Aorta (tissue), 5 donors: ENCODE measurements at regions of chr20 and their contacts with region 1.

Region 1: DNA sequence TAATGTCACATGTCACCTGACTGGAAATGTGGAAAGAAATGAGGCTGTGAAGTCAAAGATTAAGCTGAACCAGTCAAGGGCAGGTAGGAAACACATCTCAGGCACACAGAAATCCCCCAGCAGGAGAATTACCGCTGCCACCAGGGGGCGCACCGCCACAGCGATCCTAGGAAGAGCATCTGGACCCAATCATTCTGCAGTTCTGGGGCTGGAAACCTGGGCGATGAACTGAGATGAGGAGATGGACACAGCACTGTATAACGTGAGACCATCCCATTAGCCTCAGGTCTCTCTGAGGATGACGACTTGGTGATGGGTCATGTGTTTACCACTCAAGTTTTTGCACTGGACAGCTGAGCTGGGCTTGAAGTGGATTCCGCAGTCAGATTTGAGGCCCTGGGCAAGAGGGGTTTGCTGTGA is 6.5 kb upstream of the SLC24A3 start:
- DNase-seq: peak; percentile 70 to 95
- ATAC-seq: peak; percentile 84
- H3K4me3 ChIP-seq: no peak overlapping the region
- H3K27ac ChIP-seq: no peak overlapping the region
- H3K4me1 ChIP-seq: no peaks in the 10 kb centered on the region
- H3K27me3 ChIP-seq: no peaks in the 10 kb centered on the region

Region 2: DNA sequence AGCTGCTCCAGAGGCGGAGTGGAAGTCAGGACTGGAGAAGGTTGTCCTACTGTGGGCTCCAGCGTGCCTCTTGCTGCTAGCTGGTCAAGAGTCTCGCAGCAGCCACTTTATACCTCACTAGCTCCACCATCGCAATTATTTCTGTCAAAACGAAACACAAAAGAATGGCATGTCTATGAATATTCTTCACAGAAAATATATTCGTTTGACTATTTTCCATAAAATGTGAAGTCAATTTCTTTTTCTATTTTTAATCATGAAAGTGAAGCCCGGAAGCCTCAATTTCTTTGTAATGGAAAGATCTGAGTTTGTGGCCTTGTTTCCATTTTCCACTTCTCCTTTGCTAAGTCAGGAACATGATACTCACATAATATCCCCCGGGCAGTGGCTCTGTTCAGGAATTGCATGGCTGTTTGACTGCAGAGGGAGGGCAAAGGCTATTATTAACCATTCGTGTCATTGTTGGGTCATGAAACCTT is 566.4 kb before region 1 on chr20:
- intact Hi-C with region 1: loop called in 1 of 2 experiments (anchors 5 kb)
- DNase-seq: no peak
- ATAC-seq: no peak
- H3K4me3 ChIP-seq: no peak overlapping the region
- H3K27ac ChIP-seq: no peak overlapping the region
- H3K4me1 ChIP-seq: peaks cover 0 to 2% of the 10 kb centered on the region in 2 donors
- H3K27me3 ChIP-seq: no peaks in the 10 kb centered on the region

Region 3: GRCh38 chr20:19583532-19584175 is 377.7 kb after region 1 on chr20:
- intact Hi-C with region 1: loop called (anchors 2 kb)
- DNase-seq: peak; percentile 74 to 91
- ATAC-seq: peak; percentile 66
- H3K4me3 ChIP-seq: no peak overlapping the region
- H3K27ac ChIP-seq: no peak overlapping the region
- H3K4me1 ChIP-seq: peaks cover 0 to under 1% of the 10 kb centered on the region in 2 donors
- H3K27me3 ChIP-seq: no peaks in the 10 kb centered on the region

Region 4: GRCh38 chr20:19588732-19589131 is 382.7 kb after region 1 on chr20:
- intact Hi-C with region 1: loop called (anchors 2 kb)
- DNase-seq: no peak
- ATAC-seq: no peak
- H3K4me3 ChIP-seq: no peak overlapping the region
- H3K27ac ChIP-seq: no peak overlapping the region
- H3K4me1 ChIP-seq: peaks cover 0 to 14% of the 10 kb centered on the region in 2 donors
- H3K27me3 ChIP-seq: no peaks in the 10 kb centered on the region

Region 5: DNA sequence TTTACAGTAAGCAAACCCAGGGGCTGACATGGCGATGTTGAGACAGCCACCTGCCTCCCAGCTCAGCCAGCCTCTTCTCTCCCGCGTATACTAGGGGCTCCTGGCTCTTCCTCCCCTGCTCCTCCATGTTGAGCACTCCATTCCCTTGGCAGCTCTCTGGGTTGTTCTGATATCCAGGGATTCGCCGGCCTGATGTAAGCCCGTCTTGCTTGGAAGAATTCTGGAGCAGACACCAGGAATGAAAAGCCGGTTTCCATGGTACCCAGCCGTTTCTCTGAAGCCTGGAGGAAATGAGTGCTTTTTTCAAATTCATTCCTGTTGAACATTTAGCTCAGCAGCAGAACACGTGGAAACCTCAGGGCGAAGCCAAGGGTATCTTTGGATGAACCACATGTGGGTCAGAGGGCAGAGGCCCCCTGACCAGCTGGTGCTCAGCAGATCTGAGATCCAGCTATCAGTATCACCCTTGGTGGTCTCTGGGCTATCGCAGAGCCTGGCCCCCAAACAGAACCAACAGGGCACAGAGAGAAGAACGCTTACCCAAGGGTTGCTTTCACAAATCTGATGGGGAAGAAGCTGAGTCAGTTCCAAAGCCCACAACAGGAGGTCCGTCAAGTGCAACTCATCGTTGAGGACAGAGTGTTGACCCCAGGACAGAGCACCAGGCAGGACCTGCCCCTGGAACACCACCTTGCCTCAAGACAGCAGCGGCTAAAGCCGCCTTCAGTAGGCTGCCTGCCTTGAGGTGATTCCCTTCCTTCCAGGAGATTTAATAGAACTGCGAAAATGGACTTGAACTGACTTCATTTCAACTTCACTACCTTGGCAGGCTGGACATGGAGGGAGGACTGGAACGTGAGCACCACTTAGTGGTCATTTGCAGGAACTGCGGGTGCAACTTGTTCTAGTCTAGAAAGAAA is 456.0 kb after region 1 on chr20:
- intact Hi-C with region 1: loop called (anchors 2 kb)
- DNase-seq: peak in 1 of 2 donors; percentile 68
- ATAC-seq: peak; percentile 90
- H3K4me3 ChIP-seq: no peak overlapping the region
- H3K27ac ChIP-seq: no peak overlapping the region
- H3K4me1 ChIP-seq: peaks cover 0 to 3% of the 10 kb centered on the region in 2 donors
- H3K27me3 ChIP-seq: no peaks in the 10 kb centered on the region